Left cardiac atrium (tissue), 4 donors: ENCODE measurements at regions of chr22 and their contacts with region 1.

Region 1: DNA sequence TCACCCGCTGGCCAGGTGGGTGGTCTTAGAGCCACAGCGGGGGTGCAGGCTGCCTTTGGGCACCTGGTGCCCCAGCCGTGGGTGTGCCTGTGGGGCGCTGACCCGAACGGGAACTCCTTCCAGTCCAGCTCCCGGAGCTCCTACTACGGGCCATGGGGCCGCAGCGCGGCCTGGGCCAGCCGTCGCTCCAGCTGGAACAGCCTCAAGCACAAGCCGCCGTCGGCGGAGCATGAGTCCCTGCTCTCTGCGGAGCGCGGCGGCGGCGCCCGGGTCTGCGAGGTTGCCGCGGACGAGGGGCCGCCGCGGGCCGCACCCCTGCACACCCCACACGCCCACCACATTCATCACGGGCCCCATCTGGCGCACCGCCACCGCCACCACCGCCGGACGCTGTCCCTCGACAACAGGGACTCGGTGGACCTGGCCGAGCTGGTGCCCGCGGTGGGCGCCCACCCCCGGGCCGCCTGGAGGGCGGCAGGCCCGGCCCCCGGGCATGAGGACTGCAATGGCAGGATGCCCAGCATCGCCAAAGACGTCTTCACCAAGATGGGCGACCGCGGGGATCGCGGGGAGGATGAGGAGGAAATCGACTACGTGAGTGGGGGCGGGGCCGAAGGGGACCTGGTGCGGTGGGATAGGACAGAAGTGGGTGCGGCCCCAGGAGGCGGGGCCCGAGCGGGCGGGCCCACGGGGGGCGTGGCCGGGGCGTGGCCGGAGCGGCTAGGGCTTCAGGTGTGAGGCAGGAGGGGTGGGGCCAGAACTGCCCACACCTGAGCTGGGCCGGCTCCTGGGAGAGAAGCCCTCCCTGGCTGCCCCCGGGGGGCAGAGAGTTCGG is 91.5 kb downstream of the CACNA1I start:
- DNase-seq: peak; percentile 38
- ATAC-seq: no peak

Region 2: DNA sequence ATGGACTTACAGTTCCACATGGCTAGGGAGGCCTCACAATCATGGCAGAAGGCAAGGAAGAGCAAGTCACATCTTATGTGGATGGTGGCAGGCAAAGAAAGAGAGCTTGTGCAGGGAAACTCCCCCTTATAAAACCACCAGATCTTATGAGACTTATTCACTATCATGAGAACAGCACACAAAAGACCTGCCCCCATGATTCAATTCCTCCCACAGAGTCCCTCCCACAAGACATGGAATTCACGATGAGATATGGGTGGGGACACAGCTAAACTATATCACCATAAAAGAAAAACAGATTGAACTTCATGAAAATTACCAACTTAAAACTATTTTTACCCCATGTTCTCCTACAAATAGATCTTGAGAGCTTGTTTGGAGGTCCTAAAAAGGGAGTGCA is 211.9 kb after region 1 on chr22:
- intact Hi-C with region 1: loop called in 1 of 2 experiments (anchors 10 kb)
- DNase-seq: no peak
- ATAC-seq: no peak